HCT116 (cell line): ENCODE measurements at regions of chr5 and their contacts with region 1.

Region 1: DNA sequence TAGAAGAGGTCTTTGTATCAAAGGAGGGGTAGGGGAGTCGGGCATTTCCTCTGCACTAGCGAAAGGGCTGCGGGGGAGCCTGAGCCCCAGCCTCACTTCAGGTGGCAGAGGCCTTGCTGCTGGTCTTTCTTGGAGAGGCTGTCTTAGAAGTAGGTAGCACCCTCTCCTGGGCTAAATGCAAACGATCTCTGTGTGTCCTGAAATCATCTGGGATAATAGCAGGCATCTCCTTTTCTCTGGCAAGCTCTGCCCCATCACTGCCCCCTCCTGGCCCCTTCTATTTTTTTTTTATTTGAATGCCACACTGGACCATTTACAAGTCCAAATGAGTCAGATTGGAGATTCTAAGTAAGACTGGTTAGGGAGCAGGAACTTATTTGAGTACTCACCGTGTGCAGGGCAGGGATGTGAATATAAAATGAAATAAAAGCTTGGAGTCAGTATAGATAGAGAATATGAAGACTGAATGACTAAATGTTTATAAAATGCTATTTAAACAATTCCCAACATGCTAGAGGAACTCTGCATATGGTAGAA is 137.1 kb downstream of the FGF1 start:
- DNase-seq: peak; percentile 93
- ATAC-seq: peak; percentile 99
- H3K4me3 ChIP-seq: no peak overlapping the region
- H3K27ac ChIP-seq: no peak overlapping the region
- H3K4me1 ChIP-seq: peaks cover 12 to 42% of the 10 kb centered on the region in 2 experiments
- H3K27me3 ChIP-seq: no peaks in the 10 kb centered on the region
- CTCF ChIP-seq: peak; percentile 85 to 99 (median 93)
- POLR2A ChIP-seq: no peak
- RAD21 ChIP-seq: peak; percentile 100

Region 2: DNA sequence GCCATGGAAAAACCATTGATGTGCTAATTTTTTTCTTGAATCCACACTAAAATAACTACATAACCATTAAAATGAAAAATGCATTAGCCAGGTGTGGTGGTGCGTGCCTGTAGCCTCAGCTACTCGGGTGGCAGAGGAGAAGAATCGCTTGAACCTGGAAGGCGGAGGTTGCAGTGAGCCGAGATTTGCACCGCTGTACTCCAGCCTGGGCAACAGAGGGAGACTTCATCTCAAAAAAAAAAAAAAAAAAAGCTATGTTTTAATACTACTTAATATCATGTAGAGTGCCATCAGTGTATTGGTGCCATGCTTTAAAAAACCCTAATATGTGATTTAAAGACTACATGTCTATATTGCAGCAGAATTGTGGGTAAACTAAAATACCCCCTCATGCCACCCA is 381.3 kb before region 1 on chr5:
- CTCF ChIA-PET with region 1: interaction called, 7 read pairs
- POLR2A ChIA-PET with region 1: no interaction called
- RAD21 ChIA-PET with region 1: interaction called in 1 of 2 experiments, 3 read pairs
- intact Hi-C with region 1: loop called (anchors 5 kb)
- DNase-seq: no peak
- ATAC-seq: peak; percentile 71
- H3K4me3 ChIP-seq: no peak overlapping the region
- H3K27ac ChIP-seq: no peak overlapping the region
- H3K4me1 ChIP-seq: peaks cover 3 to 31% of the 10 kb centered on the region in 2 experiments; a peak in 3 of 4 replicates
- H3K27me3 ChIP-seq: no peaks in the 10 kb centered on the region
- CTCF ChIP-seq: peak; percentile 42 to 55 (median 45); a peak in 5 of 6 replicates
- POLR2A ChIP-seq: no peak
- RAD21 ChIP-seq: peak; percentile 73

Region 3: DNA sequence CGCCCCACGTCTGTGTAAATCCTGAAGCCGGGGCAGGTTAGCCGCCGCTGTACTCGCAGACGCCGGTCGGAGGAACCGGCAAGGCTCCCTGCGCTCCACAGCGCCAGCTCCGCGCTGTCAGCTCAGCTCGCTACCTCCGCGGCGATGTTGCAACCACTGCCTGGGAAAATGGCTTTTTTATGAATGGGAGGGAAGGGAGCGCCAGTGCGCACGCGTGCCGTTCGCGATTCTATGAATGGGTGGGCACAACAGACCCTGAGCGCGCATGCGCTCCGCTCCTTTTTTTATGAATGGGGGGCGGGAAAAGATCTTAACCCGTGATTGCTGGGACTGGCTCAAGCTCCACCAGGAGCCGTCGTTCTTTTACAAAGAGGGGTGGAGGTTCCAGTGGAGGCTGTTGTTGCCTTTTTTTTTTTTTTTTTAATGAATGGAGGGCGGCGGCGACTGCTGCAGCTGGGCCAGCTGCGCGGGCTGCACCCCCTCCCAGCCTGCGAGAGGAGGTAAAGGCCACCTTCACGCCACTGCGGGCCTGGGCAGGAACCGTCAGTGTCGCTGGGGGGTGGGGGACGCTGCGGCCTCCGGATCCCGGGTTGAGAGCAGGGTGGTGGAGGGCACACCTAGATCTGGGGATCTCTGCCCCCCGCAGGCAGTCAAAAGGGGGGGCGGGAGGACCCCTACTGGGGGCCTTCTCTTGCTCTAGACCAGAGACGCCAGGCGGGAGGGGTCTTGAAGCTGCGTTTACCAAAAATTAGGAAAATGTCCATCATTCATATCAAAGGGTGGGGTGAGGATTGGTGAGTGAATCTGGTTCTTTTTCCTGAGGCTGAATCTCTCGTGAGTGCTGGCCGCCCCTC is 223.7 kb before region 1 on chr5 and contains the start of gene SPRY4:
- CTCF ChIA-PET with region 1: interaction called, 20 read pairs
- POLR2A ChIA-PET with region 1: interaction called, 9 read pairs
- RAD21 ChIA-PET with region 1: no interaction called
- intact Hi-C with region 1: loop called (anchors 2 kb)
- DNase-seq: peak; percentile 95
- ATAC-seq: peak; percentile 51
- H3K4me3 ChIP-seq: peak within 1 kb of the TSS; percentile 78 to 98
- H3K27ac ChIP-seq: peak within 1 kb of the TSS; percentile 98
- H3K4me1 ChIP-seq: peaks cover 61 to 72% of the 10 kb centered on the region in 2 experiments
- H3K27me3 ChIP-seq: no peaks in the 10 kb centered on the region
- CTCF ChIP-seq: 0 out of 6 replicates have a peak, but pooled peaks of 1 of the 3 experiments have one; percentile 5
- POLR2A ChIP-seq: peak; percentile 98
- RAD21 ChIP-seq: no peak
- total RNA-seq, gene SPRY4: 112 TPM

Region 4: GRCh38 chr5:142364251-142365145 is 184.3 kb before region 1 on chr5:
- CTCF ChIA-PET with region 1: interaction called, 9 read pairs
- POLR2A ChIA-PET with region 1: interaction called, 18 read pairs
- RAD21 ChIA-PET with region 1: interaction called in 1 of 2 experiments, 3 read pairs
- intact Hi-C with region 1: loop called (anchors 2 kb)
- DNase-seq: no peak
- ATAC-seq: peak; percentile 67
- H3K4me3 ChIP-seq: peak overlapping the region; percentile 56 to 69
- H3K27ac ChIP-seq: peak overlapping the region; percentile 99
- H3K4me1 ChIP-seq: peaks cover 84 to 97% of the 10 kb centered on the region in 2 experiments
- H3K27me3 ChIP-seq: no peaks in the 10 kb centered on the region
- CTCF ChIP-seq: peak in 1 of 3 experiments; percentile 18; a peak in 1 of 6 replicates
- POLR2A ChIP-seq: peak; percentile 56
- RAD21 ChIP-seq: no peak

Region 5: GRCh38 chr5:142478113-142478512 is 70.7 kb before region 1 on chr5:
- CTCF ChIA-PET with region 1: no interaction called
- POLR2A ChIA-PET with region 1: no interaction called
- RAD21 ChIA-PET with region 1: no interaction called
- intact Hi-C with region 1: no loop called
- DNase-seq: no peak
- ATAC-seq: no peak
- H3K4me3 ChIP-seq: no peak overlapping the region
- H3K27ac ChIP-seq: no peak overlapping the region
- H3K4me1 ChIP-seq: peaks cover 13 to 24% of the 10 kb centered on the region in 2 experiments
- H3K27me3 ChIP-seq: no peaks in the 10 kb centered on the region
- CTCF ChIP-seq: no peak
- POLR2A ChIP-seq: no peak
- RAD21 ChIP-seq: no peak

Region 6: DNA sequence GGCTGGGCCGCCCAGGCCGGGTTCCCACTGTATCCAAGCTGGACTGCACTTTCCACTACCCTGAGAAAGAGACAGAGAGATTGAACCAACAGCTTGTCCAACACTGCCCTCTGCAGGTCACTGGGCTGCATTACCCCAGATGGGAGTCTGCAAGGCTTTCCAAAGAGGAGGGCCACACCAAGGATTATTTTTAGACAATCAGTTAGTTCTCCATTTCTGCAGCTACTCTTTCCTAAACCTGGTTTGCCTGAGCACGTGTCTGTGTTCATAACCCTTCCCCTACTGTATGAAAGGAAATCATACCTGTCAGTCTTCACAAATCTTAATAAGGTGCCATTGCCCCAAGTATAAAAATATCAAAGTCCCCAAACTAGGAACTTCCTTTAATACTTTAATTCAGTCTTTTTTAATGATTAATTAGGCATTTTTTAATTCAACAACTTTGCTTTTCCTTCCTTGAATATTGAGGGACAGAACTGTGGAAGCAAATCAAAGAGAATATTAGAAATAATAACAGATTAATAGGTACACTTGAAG is 150.4 kb after region 1 on chr5:
- CTCF ChIA-PET with region 1: interaction called, 9 read pairs
- POLR2A ChIA-PET with region 1: no interaction called
- RAD21 ChIA-PET with region 1: interaction called in 1 of 2 experiments, 4 read pairs
- intact Hi-C with region 1: loop called (anchors 2 kb)
- DNase-seq: peak; percentile 66
- ATAC-seq: peak; percentile 98
- H3K4me3 ChIP-seq: no peak overlapping the region
- H3K27ac ChIP-seq: no peak overlapping the region
- H3K4me1 ChIP-seq: peaks cover 11 to 14% of the 10 kb centered on the region in 2 experiments; a peak in 3 of 4 replicates
- H3K27me3 ChIP-seq: no peaks in the 10 kb centered on the region
- CTCF ChIP-seq: peak; percentile 94 to 97 (median 97)
- POLR2A ChIP-seq: no peak
- RAD21 ChIP-seq: peak; percentile 100